ENCODE measurements at regions of chr2 and their contacts with region 1.

Region 1: DNA sequence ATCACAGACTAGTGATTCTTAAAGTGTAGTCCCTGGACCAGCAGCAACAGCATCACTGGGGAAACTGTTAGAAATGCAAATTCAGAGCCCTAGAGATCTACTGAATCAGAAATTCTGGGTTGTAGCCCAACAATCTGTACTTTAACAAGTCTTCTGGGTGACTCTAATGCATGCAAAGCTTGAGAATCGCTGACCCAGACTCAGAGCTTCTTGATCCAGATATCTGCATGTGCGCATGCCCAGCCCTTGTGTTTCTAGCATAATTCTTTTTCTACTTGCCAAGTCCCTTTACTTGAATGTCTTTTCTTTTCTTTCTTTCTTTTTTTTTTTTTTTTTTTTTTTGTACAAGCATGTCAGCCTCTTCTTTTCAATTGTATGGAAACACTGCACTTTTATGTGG is 60.4 kb downstream of the FIGN start:
- DNase-seq: no peak
- H3K4me3 ChIP-seq: no peak overlapping the region
- H3K27ac ChIP-seq: no peak overlapping the region
- H3K27me3 ChIP-seq: no peaks in the 10 kb centered on the region
- CTCF ChIP-seq: no peak

Region 2: DNA sequence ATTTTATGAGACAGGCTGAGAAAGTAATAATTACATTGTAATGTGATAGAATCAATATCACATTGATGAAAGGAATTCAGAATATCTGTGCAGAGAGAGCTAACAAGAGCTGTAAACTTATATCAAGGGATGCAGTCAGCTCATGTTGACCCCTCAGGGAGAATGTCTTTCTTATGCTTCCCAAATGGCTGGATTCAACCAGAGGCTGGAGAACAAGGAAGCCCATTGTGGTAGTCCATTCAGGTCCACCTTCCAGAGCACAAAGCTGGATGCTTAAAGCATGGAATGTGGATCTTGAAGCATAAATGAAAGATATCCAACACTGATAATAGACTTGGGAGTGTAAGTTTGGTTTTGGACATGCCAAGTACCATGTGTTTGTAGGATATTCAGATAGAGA is 159.6 kb before region 1 on chr2:
- CTCF ChIA-PET with region 1: no interaction called
- POLR2A ChIA-PET with region 1: no interaction called
- DNase-seq: no peak
- H3K4me3 ChIP-seq: no peak overlapping the region
- H3K27ac ChIP-seq: no peak overlapping the region
- H3K27me3 ChIP-seq: no peaks in the 10 kb centered on the region
- CTCF ChIP-seq: no peak

Region 3: DNA sequence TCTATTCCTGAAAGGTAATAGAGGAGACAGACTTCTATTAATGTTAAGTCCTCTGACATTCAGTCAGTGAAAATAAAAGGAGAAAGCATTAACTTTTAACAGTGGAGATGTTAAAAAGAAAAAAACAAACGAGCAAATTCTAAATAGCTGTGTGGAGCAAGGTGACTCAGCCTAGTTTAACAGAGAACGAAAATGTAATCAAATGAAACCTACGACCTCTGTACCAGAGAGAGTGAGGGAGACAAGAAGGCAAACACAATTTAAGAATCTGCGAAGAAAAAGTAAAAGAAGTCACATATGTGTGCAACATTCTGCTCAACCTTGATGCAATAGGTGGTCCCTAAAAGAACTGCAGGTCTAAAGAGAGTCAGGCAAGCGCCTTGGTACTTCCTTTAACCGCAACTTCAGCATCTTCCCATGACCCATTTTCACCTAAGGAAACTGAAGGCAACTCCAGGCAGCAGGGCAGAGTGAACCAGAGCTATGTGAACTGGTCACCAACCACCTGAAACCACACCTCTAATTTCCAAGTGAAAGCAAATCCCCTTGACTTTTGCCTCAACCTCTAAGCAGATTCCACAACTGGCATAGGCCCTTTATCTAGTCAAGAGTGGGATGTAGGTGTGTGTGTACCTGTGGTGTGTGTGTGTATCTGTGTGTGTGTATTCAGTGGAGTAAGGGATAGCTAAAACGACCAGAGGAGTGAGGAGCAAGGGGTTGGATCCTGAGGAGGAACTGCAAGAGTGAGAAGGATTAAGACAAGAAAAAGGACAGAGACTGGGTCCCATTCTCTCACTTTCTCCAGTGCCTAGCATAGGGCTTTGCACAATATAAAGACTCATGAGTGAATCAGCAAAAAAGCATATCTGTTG is 17.5 kb after region 1 on chr2:
- CTCF ChIA-PET with region 1: interaction called, 10 read pairs
- POLR2A ChIA-PET with region 1: no interaction called
- DNase-seq: peak; percentile 3
- H3K4me3 ChIP-seq: no peak overlapping the region
- H3K27ac ChIP-seq: no peak overlapping the region
- H3K27me3 ChIP-seq: no peaks in the 10 kb centered on the region
- CTCF ChIP-seq: no peak